PC-3 (cell line): ENCODE measurements at regions of chr12 and their contacts with region 1.

Region 1: DNA sequence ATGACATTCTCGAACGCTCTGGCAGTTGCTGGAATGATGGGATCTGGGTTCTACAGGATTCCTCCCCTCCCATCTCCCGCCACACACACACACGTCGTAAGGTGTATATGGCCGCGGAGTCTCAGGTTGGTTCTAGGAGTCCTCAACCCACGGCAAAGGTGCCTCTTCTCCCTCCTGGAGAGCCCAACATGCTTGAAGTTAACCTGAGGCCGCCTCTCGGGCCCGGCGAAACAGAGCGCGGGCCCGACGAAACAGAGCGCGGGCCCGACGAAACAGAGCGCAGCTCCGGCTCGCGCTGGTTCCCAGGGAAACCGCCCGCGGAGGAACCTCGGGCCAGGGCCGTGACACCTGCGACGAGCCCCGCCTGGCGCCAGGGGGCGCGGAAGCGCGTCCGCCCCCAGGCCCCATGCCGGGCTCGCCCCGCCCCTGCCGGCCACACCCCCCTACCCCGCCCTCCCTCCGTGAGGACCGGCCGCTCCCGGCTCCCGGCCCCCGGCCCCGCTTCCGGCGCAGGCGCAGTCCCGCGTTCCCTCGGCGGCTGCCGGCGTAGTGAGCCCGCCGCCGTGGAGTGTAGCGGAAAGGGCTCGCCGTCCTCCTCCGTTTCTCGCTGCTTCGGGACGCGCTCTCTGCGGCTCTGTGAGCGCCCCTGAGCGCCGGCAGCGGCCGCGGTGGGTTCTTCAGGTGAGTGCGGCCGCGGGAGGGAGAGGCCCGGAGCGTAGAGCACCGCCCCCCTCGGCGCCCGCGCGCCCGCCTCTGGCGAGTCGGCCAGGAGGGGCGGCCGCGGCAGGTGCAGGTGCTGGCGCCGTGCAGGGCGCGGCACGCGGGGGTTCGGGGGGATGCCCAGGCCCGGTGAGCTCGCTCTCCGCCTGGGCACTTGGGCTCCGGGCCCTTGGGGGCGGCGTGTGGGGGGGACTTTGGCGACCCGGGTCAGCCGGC is at the start of gene RAB3IP:
- DNase-seq: peak; percentile 91
- ATAC-seq: peak; percentile 86
- H3K4me3 ChIP-seq: peak within 1 kb of the TSS; percentile 88
- H3K27ac ChIP-seq: peak within 1 kb of the TSS; percentile 21
- H3K4me1 ChIP-seq: peaks cover 19% of the 10 kb centered on the region
- H3K27me3 ChIP-seq: no peaks in the 10 kb centered on the region
- CTCF ChIP-seq: peak; percentile 49
- total RNA-seq, gene RAB3IP: 22.2 and 28.6 TPM in 2 replicates

Region 2: GRCh38 chr12:69666798-69667197 is 71.8 kb before region 1 on chr12:
- CTCF ChIA-PET with region 1: interaction called, 5 read pairs
- POLR2A ChIA-PET with region 1: no interaction called
- intact Hi-C with region 1: loop called (anchors 5 kb)
- DNase-seq: no peak
- ATAC-seq: no peak
- H3K4me3 ChIP-seq: no peak overlapping the region
- H3K27ac ChIP-seq: no peak overlapping the region
- H3K4me1 ChIP-seq: no peaks in the 10 kb centered on the region
- H3K27me3 ChIP-seq: no peaks in the 10 kb centered on the region
- CTCF ChIP-seq: no peak

Region 3: DNA sequence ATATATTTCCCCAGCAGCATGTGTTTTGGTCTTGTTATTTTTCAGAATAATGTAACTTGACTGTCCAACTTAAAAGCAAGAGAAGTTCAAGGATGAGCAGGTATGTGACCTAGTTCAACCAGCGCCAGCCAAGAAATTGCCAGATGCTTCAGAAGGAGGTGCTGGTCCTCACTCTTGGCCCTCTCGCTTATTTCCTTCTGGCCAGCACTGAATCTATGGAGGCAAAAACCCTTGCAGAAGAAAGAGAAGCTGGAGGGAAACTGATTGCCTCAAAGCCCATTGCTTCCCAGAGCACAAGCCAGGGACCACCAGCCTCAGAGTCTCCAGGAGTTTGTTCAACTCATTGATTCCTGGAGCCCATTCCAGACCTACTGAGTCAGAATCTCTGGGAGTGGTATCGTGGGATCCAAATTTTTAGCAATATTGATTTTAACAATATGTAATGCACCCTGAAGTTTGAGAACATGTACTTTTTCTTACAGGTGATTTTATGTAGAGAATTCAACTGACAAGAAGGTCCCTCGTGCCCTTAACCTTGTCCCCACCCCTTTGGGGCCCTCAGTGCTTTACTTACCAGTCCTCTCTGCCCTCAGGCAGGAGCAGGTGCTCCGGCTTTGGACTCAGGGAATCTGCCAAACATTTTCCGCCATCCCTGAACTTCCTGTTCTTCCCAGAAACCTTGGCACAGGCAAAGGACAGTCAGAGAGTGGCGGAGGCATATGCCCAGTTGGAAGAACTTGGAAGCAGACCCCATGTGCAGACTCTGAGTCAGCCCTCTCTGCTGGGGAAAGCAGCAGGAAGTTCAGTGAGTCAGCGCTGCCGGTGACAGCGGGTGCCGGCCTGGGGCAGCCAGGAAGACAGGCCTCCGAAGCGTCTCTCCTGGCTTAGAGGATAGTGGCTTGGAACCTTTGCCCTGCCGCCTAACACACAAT is 49.9 kb before region 1 on chr12:
- CTCF ChIA-PET with region 1: no interaction called
- POLR2A ChIA-PET with region 1: no interaction called
- intact Hi-C with region 1: loop called (anchors 2 kb)
- DNase-seq: peak; percentile 97
- ATAC-seq: peak; percentile 91
- H3K4me3 ChIP-seq: peak overlapping the region; percentile 28
- H3K27ac ChIP-seq: peak overlapping the region; percentile 85
- H3K4me1 ChIP-seq: peaks cover 47% of the 10 kb centered on the region
- H3K27me3 ChIP-seq: no peaks in the 10 kb centered on the region
- CTCF ChIP-seq: no peak